ENCODE measurements at regions of chr11 and their contacts with region 1.

Region 1: DNA sequence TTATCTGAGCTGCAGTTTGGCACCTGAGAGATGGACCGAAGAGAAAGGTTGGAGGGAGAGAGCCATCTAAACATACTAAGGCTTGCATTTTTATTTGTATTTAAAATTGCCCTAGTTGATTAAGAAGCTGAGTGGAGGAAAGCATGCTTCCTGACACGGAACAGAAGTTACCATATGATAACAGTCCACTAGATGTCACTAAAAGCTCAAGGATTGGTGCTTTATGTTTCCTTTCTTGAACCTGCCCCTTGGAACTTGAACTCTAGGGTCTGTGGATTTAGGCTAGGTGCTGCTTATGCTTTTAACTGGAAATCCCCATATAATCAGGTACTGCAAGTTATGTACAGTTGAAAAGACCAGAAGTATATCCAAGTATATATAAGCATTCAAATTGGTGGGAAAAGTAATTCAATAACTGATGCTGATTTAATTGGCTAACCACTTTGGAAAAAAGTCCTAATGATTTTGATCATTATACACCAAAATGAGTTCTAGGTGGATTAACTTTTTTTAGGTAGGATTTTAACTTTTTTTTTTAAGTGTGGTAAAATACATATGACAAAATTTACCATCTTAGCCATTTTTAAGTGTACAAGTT is 9.5 kb downstream of the RBMXL2 start:
- DNase-seq: no peak
- H3K4me3 Mint-ChIP-seq: no peak overlapping the region
- H3K27ac Mint-ChIP-seq: no peak overlapping the region
- H3K4me1 Mint-ChIP-seq: no peaks in the 10 kb centered on the region
- H3K27me3 Mint-ChIP-seq: peaks cover 11% of the 10 kb centered on the region

Region 2: GRCh38 chr11:7116370-7116769 is 18.0 kb after region 1 on chr11:
- CTCF ChIA-PET with region 1: no interaction called
- intact Hi-C with region 1: no loop called
- DNase-seq: no peak
- H3K4me3 Mint-ChIP-seq: no peak overlapping the region
- H3K27ac Mint-ChIP-seq: no peak overlapping the region
- H3K4me1 Mint-ChIP-seq: no peaks in the 10 kb centered on the region
- H3K27me3 Mint-ChIP-seq: peaks cover 9% of the 10 kb centered on the region

Region 3: GRCh38 chr11:7196396-7197146 is 98.2 kb after region 1 on chr11:
- CTCF ChIA-PET with region 1: no interaction called
- intact Hi-C with region 1: no loop called
- DNase-seq: no peak
- H3K4me3 Mint-ChIP-seq: no peak overlapping the region
- H3K27ac Mint-ChIP-seq: no peak overlapping the region
- H3K4me1 Mint-ChIP-seq: no peaks in the 10 kb centered on the region
- H3K27me3 Mint-ChIP-seq: peaks cover 4% of the 10 kb centered on the region

Region 4: DNA sequence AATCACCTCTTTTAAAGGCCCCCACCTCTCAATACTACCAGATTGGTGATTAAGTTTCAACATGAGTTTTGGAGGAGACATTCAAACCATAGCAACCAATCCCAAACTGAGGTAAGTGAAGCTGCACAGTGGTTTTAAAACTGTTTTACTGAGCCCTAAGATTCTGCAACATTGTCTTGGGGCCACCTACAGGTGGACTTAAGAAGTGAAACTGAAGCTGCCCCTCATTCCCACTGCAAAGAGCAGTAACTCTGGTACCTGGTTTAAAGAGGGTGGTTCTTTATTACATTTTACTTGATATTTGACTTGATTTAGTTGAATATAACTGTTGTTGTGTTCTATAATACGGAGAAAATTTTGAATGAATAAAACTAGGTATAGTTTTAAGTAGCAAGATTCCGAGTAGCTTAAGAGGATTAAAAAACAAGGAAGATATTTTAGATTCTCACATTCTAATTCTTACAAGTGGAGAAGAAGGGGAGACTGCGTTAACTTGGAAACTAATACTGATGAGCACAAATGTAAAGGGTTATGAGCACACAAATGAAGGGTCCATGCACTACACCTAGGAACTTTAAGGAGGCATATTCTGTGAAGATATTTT is 180.1 kb after region 1 on chr11:
- CTCF ChIA-PET with region 1: interaction called, 11 read pairs
- intact Hi-C with region 1: loop called (anchors 5 kb)
- DNase-seq: no peak
- H3K4me3 Mint-ChIP-seq: no peak overlapping the region
- H3K27ac Mint-ChIP-seq: no peak overlapping the region
- H3K4me1 Mint-ChIP-seq: no peaks in the 10 kb centered on the region
- H3K27me3 Mint-ChIP-seq: peaks cover 3% of the 10 kb centered on the region

Region 5: DNA sequence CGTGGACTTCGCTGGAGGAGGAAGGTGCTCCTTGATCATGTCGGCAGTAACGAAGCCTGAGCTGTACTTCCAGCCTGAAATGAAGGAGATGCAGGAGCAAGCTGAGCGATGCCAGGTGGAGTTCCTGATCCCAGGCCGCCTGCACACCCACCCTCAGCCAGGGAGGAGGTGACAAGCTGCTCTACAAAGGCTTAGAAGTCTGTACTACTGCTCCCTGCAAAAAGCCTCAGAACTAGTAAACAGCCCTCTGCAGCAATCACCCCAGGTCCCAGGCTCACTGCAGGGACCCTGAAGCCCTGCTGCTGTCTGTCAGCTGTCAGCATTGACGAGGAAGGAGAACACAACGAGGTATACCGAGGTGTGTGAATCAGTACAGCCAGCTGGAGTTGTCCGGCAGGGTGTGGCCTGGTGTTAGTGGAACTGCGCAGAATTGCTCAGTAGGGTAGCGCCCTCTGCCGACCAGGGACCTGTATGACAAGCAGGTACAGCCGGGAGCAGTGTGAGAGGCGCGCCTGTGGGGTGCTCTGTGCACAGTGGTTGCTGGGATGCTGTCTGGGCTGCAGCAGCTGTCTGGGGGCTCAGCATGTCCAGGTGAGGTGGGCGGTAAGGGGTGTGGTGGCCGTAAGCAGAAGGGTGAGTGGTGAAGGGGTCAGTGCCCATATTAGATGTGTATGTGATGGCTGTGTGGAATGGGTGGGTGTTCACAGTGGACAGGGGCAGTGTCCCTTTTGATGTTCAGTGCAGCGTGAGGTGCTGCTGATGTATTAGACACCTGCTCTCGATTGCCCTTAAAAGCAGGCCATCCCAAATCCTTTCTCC is 567.3 kb after region 1 on chr11:
- CTCF ChIA-PET with region 1: interaction called, 3 read pairs
- intact Hi-C with region 1: loop called (anchors 1 kb)
- DNase-seq: peak; percentile 85
- H3K4me3 Mint-ChIP-seq: no peak overlapping the region
- H3K27ac Mint-ChIP-seq: no peak overlapping the region
- H3K4me1 Mint-ChIP-seq: peaks cover 7% of the 10 kb centered on the region
- H3K27me3 Mint-ChIP-seq: no peaks in the 10 kb centered on the region

Region 6: GRCh38 chr11:7696424-7696823 is 598.1 kb after region 1 on chr11:
- CTCF ChIA-PET with region 1: interaction called, 13 read pairs
- intact Hi-C with region 1: loop called (anchors 1 kb)
- DNase-seq: no peak
- H3K4me3 Mint-ChIP-seq: no peak overlapping the region
- H3K27ac Mint-ChIP-seq: no peak overlapping the region
- H3K4me1 Mint-ChIP-seq: peaks cover 7% of the 10 kb centered on the region
- H3K27me3 Mint-ChIP-seq: peaks cover 23% of the 10 kb centered on the region

Measured in activated naive CD4-positive, alpha-beta T cell treated with anti-CD3 and anti-CD28 coated beads for 36 hours (primary cell).